ENCODE measurements at regions of chr10 and their contacts with region 1.

Region 1: GRCh38 chr10:105112862-105113261 is 471.8 kb downstream of the SORCS3 start:
- DNase-seq: no peak
- ATAC-seq: no peak
- H3K4me3 ChIP-seq: no peak overlapping the region
- H3K27ac ChIP-seq: no peak overlapping the region
- H3K4me1 ChIP-seq: no peaks in the 10 kb centered on the region
- H3K27me3 ChIP-seq: no peaks in the 10 kb centered on the region
- CTCF ChIP-seq: no peak
- POLR2A ChIP-seq: no peak

Region 2: DNA sequence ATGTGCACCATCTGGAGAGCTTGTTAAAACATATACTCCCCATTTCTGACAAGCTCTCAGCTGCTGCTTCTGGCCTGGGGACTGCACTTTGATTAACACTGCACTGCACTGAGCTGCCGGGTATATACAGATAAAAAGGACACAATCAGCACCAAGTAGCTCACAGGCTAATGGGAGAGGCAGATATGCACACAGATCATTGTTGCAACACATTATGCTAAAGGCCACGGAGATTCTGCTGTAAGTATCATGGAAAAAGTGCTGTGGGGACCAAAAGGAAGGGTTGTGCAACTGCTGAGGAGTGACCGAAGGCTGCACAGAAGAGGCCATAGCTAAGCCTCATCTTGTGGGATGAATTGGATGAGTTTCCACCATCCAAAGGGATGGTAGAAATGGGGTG is 16.5 kb before region 1 on chr10:
- in situ Hi-C with region 1: no loop called
- intact Hi-C with region 1: loop called (anchors 1 kb)
- DNase-seq: no peak
- ATAC-seq: no peak
- H3K4me3 ChIP-seq: no peak overlapping the region
- H3K27ac ChIP-seq: no peak overlapping the region
- H3K4me1 ChIP-seq: no peaks in the 10 kb centered on the region
- H3K27me3 ChIP-seq: no peaks in the 10 kb centered on the region
- CTCF ChIP-seq: no peak
- POLR2A ChIP-seq: no peak